Activated CD4-positive, alpha-beta T cell treated with anti-CD3 and anti-CD28 coated beads, Interleukin-2, amount 10 ng/mL, durations not matched to agents 7 days and 5 days (primary cell): ENCODE measurements at regions of chr6 and their contacts with region 1.

Region 1: GRCh38 chr6:169824021-169824420 is 72.6 kb downstream of the ERMARD start:
- DNase-seq: no peak
- H3K4me3 Mint-ChIP-seq: no peak overlapping the region
- H3K27ac Mint-ChIP-seq: no peak overlapping the region
- H3K4me1 Mint-ChIP-seq: no peaks in the 10 kb centered on the region
- H3K27me3 Mint-ChIP-seq: peaks cover 29% of the 10 kb centered on the region

Region 2: DNA sequence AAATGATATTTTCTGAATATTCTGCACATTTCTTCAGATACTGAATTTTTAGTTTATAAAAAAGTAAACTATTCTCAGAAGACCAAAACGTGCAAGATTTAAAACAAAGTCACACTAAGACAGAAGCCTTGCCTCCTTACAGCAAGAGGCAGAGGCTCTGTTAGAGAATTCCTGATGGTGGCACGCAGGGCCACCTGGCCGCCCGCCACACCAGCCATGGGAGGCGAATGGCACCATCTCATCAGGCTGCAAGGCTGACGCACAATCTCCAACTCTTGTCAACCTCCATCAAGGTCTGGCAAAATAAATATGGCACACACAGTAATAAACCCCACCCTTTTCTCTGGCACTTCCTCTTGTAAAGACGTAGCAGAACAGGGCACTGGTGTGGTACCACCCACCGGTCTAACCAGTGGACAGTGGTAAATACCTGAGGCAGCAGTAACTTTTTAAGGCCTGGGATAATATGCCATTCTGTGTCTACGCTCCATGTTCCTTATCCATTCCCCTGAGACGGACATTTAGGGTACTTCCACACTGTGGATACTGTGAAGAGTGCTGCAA is 233.6 kb before region 1 on chr6:
- CTCF ChIA-PET with region 1: no interaction called
- POLR2A ChIA-PET with region 1: interaction called, 14 read pairs
- DNase-seq: no peak
- H3K4me3 Mint-ChIP-seq: no peak overlapping the region
- H3K27ac Mint-ChIP-seq: no peak overlapping the region
- H3K4me1 Mint-ChIP-seq: peaks cover 27% of the 10 kb centered on the region
- H3K27me3 Mint-ChIP-seq: no peaks in the 10 kb centered on the region

Region 3: GRCh38 chr6:169839898-169840631 is 16.0 kb after region 1 on chr6:
- CTCF ChIA-PET with region 1: no interaction called
- POLR2A ChIA-PET with region 1: no interaction called
- DNase-seq: peak; percentile 4
- H3K4me3 Mint-ChIP-seq: no peak overlapping the region
- H3K27ac Mint-ChIP-seq: no peak overlapping the region
- H3K4me1 Mint-ChIP-seq: no peaks in the 10 kb centered on the region
- H3K27me3 Mint-ChIP-seq: peaks cover 16% of the 10 kb centered on the region

Region 4: DNA sequence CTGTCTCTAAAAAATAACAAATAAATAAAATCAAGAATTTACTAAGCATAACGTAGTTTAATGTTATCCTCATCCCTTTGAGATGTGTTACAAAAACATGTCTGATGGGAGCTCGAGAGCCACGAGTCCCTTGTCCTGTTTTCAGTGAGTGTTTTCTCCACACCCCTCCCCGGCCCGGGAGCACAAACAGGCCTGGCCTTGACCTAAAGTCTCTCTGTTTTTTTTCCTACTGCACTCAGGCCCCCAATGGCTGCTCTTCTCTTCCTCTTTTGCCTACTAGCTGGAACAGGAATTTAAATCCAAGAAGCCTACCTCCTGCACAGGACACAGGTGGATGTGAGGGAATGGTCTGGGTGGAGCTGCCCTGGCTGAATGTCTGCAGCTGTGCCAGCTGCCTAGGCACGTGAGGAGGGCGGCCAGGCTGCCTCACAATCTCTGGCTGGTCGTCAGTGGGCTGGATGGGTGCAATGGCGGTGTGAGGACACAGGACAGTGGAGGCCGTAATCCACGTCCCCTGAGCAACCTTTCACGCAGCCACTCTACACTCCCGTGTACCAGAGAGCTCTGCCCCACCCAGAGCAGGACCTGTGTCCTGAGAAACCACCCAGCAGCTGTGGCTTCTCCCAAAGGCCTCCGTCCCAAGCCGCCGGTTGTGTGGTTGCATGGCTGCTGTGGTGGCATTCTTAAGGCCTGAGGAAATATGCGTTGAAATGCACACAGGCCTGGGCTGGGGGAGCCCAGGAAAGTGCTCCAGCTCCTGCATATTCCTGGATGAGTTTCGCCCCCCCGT is 600.0 kb after region 1 on chr6:
- CTCF ChIA-PET with region 1: no interaction called
- POLR2A ChIA-PET with region 1: interaction called, 10 read pairs
- DNase-seq: no peak
- H3K4me3 Mint-ChIP-seq: no peak overlapping the region
- H3K27ac Mint-ChIP-seq: no peak overlapping the region
- H3K4me1 Mint-ChIP-seq: no peaks in the 10 kb centered on the region
- H3K27me3 Mint-ChIP-seq: peaks cover 19% of the 10 kb centered on the region